Activated CD4-positive, alpha-beta T cell treated with anti-CD3 and anti-CD28 coated beads for 36 hours (primary cell): ENCODE measurements at regions of chr17 and their contacts with region 1.

Region 1: GRCh38 chr17:76452660-76453430 is at the start of gene UBE2O:
- DNase-seq: peak; percentile 96
- ATAC-seq: peak; percentile 96
- H3K4me3 Mint-ChIP-seq: peak within 1 kb of the TSS; percentile 84
- H3K27ac Mint-ChIP-seq: peak within 1 kb of the TSS; percentile 55
- H3K4me1 Mint-ChIP-seq: peaks cover 36% of the 10 kb centered on the region
- H3K27me3 Mint-ChIP-seq: no peaks in the 10 kb centered on the region
- total RNA-seq, gene UBE2O: 28.1 to 30.7 TPM

Region 2: DNA sequence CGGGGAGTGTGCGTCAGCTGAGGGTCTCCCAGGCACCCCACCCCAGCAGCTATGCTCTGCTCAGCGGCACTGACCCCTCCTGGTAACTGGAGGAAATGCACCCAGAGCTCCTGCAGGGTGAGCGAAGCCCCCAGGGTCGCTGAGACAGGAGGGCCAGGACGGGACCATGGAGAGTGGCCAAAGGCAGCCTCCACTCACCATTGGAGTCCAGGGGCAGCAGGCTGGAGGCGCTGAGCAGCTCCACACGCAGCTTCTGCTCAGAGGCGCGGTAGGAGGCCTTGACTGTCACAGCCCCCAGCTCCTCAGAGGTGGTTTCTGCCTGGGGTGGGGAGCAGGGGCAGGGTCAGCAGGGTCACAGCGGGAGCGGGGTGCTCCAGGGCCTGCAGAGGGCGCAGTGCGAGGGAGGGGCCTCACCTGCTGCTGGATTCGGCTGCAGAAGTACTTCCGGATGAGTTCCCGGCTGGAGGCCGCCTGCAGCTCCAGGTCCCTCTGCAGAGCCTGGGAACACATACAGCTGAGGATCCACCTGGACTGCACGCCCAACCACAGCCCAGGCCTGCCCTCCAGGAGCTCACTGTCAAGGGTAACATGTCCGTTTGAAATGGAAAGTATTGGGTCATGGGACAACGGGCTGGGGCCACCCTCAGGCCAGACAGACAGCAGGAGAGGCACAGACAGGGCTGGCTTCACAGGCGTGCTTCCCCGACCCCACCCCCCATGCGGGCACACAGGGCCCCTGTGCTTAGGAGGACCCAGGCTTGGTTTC is 622.5 kb before region 1 on chr17:
- CTCF ChIA-PET with region 1: no interaction called
- POLR2A ChIA-PET with region 1: no interaction called
- intact Hi-C with region 1: no loop called
- DNase-seq: peak; percentile 59
- ATAC-seq: no peak
- H3K4me3 Mint-ChIP-seq: no peak overlapping the region
- H3K27ac Mint-ChIP-seq: no peak overlapping the region
- H3K4me1 Mint-ChIP-seq: peaks cover 36% of the 10 kb centered on the region
- H3K27me3 Mint-ChIP-seq: no peaks in the 10 kb centered on the region

Region 3: DNA sequence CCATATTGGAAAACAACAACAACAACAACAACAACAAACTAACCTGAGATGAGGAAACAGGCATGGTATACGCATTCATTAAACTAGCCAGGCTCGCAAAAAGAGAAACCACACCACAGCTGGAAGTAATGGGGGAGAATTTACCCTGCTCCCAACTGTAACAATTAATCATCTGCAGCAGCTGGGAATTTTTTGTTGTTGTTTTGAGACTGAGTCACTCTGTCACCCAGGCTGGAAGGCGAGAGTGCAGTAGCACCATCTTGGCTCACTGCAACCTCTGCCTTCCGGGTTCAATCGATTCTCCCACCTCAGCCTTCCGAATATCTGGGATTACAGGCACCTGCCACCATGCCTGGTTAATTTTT is 115.5 kb before region 1 on chr17:
- CTCF ChIA-PET with region 1: no interaction called
- POLR2A ChIA-PET with region 1: no interaction called
- intact Hi-C with region 1: no loop called
- DNase-seq: no peak
- ATAC-seq: no peak
- H3K4me3 Mint-ChIP-seq: no peak overlapping the region
- H3K27ac Mint-ChIP-seq: no peak overlapping the region
- H3K4me1 Mint-ChIP-seq: no peaks in the 10 kb centered on the region
- H3K27me3 Mint-ChIP-seq: no peaks in the 10 kb centered on the region

Region 4: GRCh38 chr17:76353599-76354316 is 99.1 kb before region 1 on chr17 and contains the start of gene PRPSAP1:
- CTCF ChIA-PET with region 1: interaction called, 4 read pairs
- POLR2A ChIA-PET with region 1: no interaction called
- intact Hi-C with region 1: loop called in 1 of 2 experiments (anchors 1 kb)
- DNase-seq: peak; percentile 88
- ATAC-seq: peak; percentile 97
- H3K4me3 Mint-ChIP-seq: peak within 1 kb of the TSS; percentile 78
- H3K27ac Mint-ChIP-seq: peak within 1 kb of the TSS; percentile 96
- H3K4me1 Mint-ChIP-seq: peaks cover 18% of the 10 kb centered on the region
- H3K27me3 Mint-ChIP-seq: no peaks in the 10 kb centered on the region
- total RNA-seq, gene PRPSAP1: 26.7 to 34.9 TPM

Region 5: DNA sequence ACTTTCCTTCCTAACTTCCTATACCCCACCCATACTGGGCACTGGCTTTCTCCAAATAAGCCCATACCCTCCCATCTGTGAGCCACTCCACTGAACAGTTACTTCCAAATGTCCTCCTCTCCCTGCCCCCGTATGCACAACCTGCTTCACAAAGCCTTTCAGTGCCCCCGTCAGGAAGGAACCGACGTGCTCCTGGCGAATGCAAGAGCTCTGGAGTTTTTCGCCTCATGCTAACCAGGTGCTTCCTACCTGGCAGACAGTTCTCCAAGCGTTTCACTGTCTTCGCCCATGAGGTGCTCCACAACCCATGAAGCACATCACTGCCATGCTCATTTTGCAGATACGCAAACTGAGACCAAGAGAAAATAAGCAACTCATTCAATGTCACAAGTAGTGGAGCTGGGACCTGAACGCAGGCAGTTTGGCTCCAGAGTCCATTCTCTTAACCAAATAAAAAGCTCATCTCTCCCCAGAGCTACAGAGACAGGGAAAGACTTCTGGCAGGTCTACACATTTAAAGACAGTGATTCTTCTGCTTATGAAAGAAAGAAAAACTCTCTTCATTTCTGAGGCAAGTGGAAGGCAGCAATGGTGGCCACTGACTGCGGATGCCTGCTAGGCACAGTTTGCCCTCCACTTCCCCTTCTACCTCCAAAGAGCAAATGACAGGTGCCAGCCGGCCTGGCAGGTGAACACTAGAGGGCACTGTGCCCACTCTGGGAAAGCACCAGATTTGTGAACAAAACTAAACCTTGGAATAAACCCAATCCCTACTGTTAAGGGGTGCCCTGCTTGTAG is 44.6 kb before region 1 on chr17:
- CTCF ChIA-PET with region 1: interaction called, 10 read pairs
- POLR2A ChIA-PET with region 1: no interaction called
- intact Hi-C with region 1: loop called (anchors 2 to 5 kb)
- DNase-seq: peak; percentile 84
- ATAC-seq: peak; percentile 90
- H3K4me3 Mint-ChIP-seq: no peak overlapping the region
- H3K27ac Mint-ChIP-seq: no peak overlapping the region
- H3K4me1 Mint-ChIP-seq: peaks cover 8% of the 10 kb centered on the region
- H3K27me3 Mint-ChIP-seq: no peaks in the 10 kb centered on the region

Region 6: GRCh38 chr17:76515274-76515949 is 62.6 kb after region 1 on chr17:
- CTCF ChIA-PET with region 1: no interaction called
- POLR2A ChIA-PET with region 1: no interaction called
- intact Hi-C with region 1: loop called in 1 of 2 experiments (anchors 1 kb)
- DNase-seq: peak; percentile 86
- ATAC-seq: peak; percentile 90
- H3K4me3 Mint-ChIP-seq: peak overlapping the region; percentile 47
- H3K27ac Mint-ChIP-seq: peak overlapping the region; percentile 94
- H3K4me1 Mint-ChIP-seq: peaks cover 32% of the 10 kb centered on the region
- H3K27me3 Mint-ChIP-seq: no peaks in the 10 kb centered on the region

Region 7: DNA sequence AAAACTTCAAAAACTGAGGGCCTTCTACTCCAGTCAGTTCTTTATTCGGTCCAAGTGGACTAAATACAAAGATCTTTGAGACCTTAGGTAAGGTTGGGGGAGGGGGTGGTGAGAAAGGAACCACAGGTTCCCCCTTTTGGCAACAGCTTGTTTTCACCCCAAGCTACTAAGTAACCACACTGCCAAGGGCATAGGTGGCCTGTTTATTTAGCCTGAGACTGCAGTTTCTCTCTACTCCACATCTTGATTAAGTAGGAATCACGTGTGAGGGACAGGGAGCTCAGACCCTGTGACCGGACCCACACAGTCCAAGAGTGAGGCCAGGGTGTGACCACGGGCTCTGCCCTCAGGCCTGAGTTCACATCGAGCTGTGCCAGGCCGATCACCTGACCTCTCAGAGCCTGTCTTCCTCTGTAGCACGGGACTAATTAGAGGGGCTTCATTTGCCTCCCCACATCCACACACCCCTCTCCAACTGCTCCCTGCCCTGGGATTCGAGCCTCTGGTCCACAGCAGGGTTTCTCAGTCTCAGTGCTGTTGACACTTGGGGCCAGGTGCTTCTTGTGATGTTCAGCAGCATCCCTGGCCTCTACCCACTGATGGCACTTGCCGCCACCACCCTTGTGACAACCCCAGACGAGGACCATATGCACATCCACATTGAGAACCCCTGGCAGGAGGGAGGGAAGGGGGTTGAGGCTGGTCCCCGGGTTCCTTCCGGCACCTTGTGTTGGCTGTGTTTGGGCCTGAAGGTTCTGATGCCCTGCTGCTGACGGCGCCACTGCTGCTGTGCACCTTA is 115.0 kb after region 1 on chr17:
- CTCF ChIA-PET with region 1: no interaction called
- POLR2A ChIA-PET with region 1: no interaction called
- intact Hi-C with region 1: no loop called
- DNase-seq: no peak
- ATAC-seq: peak; percentile 4
- H3K4me3 Mint-ChIP-seq: no peak overlapping the region
- H3K27ac Mint-ChIP-seq: no peak overlapping the region
- H3K4me1 Mint-ChIP-seq: peaks cover 18% of the 10 kb centered on the region
- H3K27me3 Mint-ChIP-seq: no peaks in the 10 kb centered on the region

Region 8: GRCh38 chr17:76726231-76726775 is 273.5 kb after region 1 on chr17 and contains the start of gene JMJD6:
- CTCF ChIA-PET with region 1: no interaction called
- POLR2A ChIA-PET with region 1: no interaction called
- intact Hi-C with region 1: loop called in 1 of 2 experiments (anchors 1 kb)
- DNase-seq: peak; percentile 97
- ATAC-seq: peak; percentile 87
- H3K4me3 Mint-ChIP-seq: peak within 1 kb of the TSS; percentile 97
- H3K27ac Mint-ChIP-seq: peak within 1 kb of the TSS; percentile 98
- H3K4me1 Mint-ChIP-seq: peaks cover 54% of the 10 kb centered on the region
- H3K27me3 Mint-ChIP-seq: no peaks in the 10 kb centered on the region
- total RNA-seq, gene JMJD6: 51.3 to 65.5 TPM